ENCODE measurements at regions of chr6 and their contacts with region 1.

Region 1: DNA sequence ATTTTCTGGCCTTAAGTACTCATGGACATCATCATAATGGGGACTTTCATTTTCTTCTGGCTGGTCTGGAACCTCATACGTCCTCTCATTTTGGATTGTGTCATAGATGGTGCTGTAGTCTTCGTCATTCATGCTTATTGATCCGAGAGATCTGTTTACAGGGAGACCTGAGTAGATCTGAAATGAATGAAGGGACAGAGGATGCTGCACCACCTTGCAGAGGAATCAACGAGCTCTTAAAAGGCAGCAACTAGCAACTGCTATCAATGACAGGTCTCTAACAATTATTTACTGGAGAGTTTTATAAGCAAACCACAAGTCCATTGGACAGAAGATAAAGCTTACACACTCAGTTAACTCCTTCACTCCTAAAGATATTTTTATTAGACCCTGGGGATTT is 49.7 kb upstream of the ENPP4 start:
- DNase-seq: no peak
- H3K4me3 ChIP-seq: no peak overlapping the region
- H3K27ac ChIP-seq: no peak overlapping the region
- H3K4me1 ChIP-seq: no peaks in the 10 kb centered on the region
- H3K27me3 ChIP-seq: no peaks in the 10 kb centered on the region
- CTCF ChIP-seq: no peak
- POLR2A ChIP-seq: no peak

Region 2: DNA sequence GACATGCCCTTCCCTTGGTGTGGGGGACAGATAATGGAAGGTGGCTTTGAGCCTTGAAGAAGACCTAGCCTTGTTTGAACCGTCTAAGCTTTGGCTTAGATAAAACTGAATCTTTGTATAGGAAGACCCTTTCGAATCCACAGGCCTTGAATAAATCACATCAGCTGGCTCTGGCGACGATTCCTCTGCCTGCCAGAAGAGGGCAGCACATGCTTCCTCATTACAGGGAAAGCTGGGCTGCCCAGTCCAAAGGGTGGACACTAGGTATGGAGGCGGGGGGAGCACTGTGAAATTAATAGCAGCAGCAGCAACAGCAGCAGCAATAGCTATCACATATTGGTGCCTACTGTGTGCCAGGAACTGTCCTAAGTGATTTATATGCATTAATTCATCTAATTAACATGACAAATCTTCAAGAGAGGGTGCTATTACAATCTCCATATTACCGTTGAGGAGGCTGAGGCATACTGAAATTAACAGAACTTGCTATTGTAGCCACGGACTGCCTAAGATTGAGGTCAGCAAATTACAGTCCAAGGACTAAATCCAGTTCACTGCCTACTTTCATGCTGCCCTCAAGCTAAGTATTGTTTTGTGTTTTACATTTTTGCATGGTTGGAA is 149.6 kb before region 1 on chr6:
- intact Hi-C with region 1: loop called (anchors 10 kb)
- DNase-seq: peak; percentile 51
- H3K4me3 ChIP-seq: no peak overlapping the region
- H3K27ac ChIP-seq: no peak overlapping the region
- H3K4me1 ChIP-seq: no peaks in the 10 kb centered on the region
- H3K27me3 ChIP-seq: no peaks in the 10 kb centered on the region
- CTCF ChIP-seq: peak; percentile 80 to 94 (median 86)
- POLR2A ChIP-seq: no peak

Region 3: GRCh38 chr6:46437671-46438221 is 357.6 kb after region 1 on chr6:
- intact Hi-C with region 1: no loop called
- DNase-seq: no peak
- H3K4me3 ChIP-seq: no peak overlapping the region
- H3K27ac ChIP-seq: no peak overlapping the region
- H3K4me1 ChIP-seq: no peaks in the 10 kb centered on the region
- H3K27me3 ChIP-seq: no peaks in the 10 kb centered on the region
- CTCF ChIP-seq: no peak
- POLR2A ChIP-seq: no peak

Measured in prostate gland (tissue), 2 donors.